Activated CD4-positive, alpha-beta T cell treated with anti-CD3 and anti-CD28 coated beads for 36 hours (primary cell): ENCODE measurements at regions of chr17 and their contacts with region 1.

Region 1: DNA sequence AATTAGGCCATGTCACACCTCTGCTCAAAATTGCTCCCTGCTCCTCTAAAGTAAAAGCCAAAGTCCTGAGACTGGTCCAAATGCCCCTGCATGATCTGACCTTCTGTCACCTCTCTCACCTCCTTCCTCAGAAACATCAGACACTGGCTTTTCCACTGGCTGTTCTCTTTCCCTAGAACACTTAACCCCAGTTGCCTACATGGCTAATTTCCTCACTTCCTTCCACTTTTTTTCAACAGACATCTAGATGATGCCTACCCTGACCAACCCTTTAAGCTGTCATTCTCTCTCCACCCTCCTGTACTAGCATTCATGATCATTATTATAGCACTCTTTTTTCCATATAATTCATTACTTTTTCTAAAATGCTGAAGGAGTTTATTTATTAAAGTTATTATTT is 31.0 kb downstream of the CCT6B start:
- DNase-seq: no peak
- ATAC-seq: no peak
- H3K4me3 Mint-ChIP-seq: no peak overlapping the region
- H3K27ac Mint-ChIP-seq: no peak overlapping the region
- H3K4me1 Mint-ChIP-seq: no peaks in the 10 kb centered on the region
- H3K27me3 Mint-ChIP-seq: peaks cover 2% of the 10 kb centered on the region

Region 2: DNA sequence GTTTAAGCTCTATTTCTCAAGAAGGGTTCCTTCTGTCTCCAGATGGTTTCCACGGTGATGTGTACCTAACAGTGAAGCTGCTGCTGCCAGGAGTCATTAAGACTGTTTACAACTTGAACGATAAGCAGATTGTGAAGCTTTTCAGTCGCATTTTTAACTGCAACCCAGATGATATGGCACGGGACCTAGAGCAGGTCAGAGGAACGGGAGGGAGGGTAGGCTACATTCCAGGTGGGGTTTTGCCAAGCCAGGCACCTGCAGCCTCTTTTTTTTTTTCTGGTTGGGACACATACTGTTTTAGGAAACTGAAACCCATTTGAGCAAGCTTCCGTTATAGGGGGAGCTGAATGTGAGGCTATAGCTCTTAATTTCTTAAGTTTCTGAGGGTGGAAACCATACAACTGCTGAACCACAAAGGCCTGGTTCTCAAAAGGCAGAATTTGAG is 60.7 kb after region 1 on chr17:
- CTCF ChIA-PET with region 1: no interaction called
- POLR2A ChIA-PET with region 1: interaction called, 13 read pairs
- intact Hi-C with region 1: no loop called
- DNase-seq: no peak
- ATAC-seq: no peak
- H3K4me3 Mint-ChIP-seq: no peak overlapping the region
- H3K27ac Mint-ChIP-seq: no peak overlapping the region
- H3K4me1 Mint-ChIP-seq: no peaks in the 10 kb centered on the region
- H3K27me3 Mint-ChIP-seq: no peaks in the 10 kb centered on the region

Region 3: GRCh38 chr17:35011671-35012210 is 81.5 kb after region 1 on chr17:
- CTCF ChIA-PET with region 1: no interaction called
- POLR2A ChIA-PET with region 1: no interaction called
- intact Hi-C with region 1: no loop called
- DNase-seq: no peak
- ATAC-seq: no peak
- H3K4me3 Mint-ChIP-seq: no peak overlapping the region
- H3K27ac Mint-ChIP-seq: no peak overlapping the region
- H3K4me1 Mint-ChIP-seq: no peaks in the 10 kb centered on the region
- H3K27me3 Mint-ChIP-seq: no peaks in the 10 kb centered on the region